Calu3 (cell line): ENCODE measurements at regions of chr15 and their contacts with region 1.

Region 1: DNA sequence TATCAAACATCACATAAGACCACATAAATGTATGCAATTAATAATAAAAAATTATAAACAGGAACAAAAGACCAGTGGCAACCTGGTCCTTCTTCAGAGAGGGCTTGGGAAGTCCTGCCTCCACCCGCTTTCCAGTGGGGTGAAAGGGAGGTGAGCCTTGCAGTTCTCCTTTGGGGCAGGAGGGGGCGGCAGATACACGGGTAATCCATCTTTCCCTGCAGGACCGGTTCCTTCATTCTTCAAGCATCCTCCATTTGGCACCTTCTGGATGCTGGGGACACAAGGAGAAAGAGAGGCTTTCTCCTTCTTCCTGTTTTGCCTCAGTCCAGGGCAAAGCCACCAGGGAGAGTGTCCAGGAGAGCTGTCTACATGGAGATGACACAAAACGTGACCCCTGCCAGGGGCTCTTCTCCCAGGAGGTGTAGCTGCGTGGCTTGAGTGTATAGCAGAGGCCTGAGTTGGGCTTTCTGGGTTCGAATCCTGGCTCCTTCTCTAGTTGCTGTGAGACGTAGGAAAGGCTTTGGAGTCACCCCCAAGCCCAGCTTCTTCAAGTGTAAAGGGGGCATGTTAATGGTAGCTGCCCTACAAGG is 23.2 kb downstream of the RPLP1 start:
- DNase-seq: peak; percentile 93
- H3K4me3 Mint-ChIP-seq: no peak overlapping the region
- H3K27ac Mint-ChIP-seq: no peak overlapping the region
- H3K4me1 Mint-ChIP-seq: peaks cover 25% of the 10 kb centered on the region
- H3K27me3 Mint-ChIP-seq: no peaks in the 10 kb centered on the region
- CTCF ChIP-seq: peak; percentile 97

Region 2: GRCh38 chr15:69523010-69524001 is 47.4 kb after region 1 on chr15:
- CTCF ChIA-PET with region 1: interaction called, 4 read pairs
- intact Hi-C with region 1: loop called (anchors 5 kb)
- DNase-seq: peak; percentile 87
- H3K4me3 Mint-ChIP-seq: no peak overlapping the region
- H3K27ac Mint-ChIP-seq: no peak overlapping the region
- H3K4me1 Mint-ChIP-seq: peaks cover 26% of the 10 kb centered on the region
- H3K27me3 Mint-ChIP-seq: no peaks in the 10 kb centered on the region
- CTCF ChIP-seq: peak; percentile 61

Region 3: GRCh38 chr15:69979783-69980182 is 503.9 kb after region 1 on chr15:
- CTCF ChIA-PET with region 1: no interaction called
- intact Hi-C with region 1: loop called (anchors 10 kb)
- DNase-seq: no peak
- H3K4me3 Mint-ChIP-seq: no peak overlapping the region
- H3K27ac Mint-ChIP-seq: no peak overlapping the region
- H3K4me1 Mint-ChIP-seq: peaks cover 13% of the 10 kb centered on the region
- H3K27me3 Mint-ChIP-seq: peaks cover 87% of the 10 kb centered on the region
- CTCF ChIP-seq: no peak

Region 4: DNA sequence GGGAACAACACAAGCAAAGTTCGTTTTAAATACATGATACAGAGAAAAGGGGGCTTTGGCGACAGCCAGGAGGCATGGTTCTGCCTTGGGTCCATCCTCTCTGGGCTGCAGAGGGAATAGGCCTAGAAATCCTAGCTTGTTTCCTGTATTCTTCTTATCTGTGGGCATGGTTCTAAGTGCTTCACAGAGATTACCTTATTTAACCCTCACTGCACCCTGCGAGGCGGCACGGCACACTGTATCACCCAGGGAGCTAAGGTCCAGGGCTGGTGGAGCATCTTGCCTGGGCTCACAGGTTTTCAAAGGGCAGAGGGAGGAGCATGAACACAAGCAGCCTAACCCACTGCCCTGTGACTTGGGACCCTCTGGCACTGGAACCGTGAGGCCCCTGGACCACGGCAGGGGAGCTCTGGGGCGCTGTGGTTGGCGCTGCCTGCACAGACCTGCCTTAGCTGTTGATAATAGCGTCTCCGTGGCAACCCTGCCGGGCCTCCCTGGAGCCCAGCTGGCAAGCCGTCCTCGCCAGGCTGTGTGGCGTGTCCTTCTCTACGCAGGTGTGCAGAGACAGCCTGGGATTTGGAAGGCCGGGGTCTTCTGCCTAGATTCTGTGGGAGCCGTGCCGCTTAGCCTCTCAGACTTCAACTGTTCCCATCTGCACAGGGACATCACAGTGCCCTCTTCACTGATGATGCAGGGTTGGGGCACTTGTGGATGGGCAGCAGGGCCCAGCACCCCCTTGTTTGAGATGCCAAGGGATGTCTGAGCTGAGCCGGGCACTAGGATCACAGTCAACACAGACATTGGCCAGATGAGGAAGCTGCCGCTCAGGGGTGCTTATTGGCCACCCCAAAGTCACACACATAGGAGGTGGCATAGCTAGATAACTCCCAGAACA is 776.4 kb after region 1 on chr15:
- CTCF ChIA-PET with region 1: no interaction called
- intact Hi-C with region 1: loop called (anchors 5 kb)
- DNase-seq: no peak
- H3K4me3 Mint-ChIP-seq: no peak overlapping the region
- H3K27ac Mint-ChIP-seq: no peak overlapping the region
- H3K4me1 Mint-ChIP-seq: peaks cover 9% of the 10 kb centered on the region
- H3K27me3 Mint-ChIP-seq: peaks cover 44% of the 10 kb centered on the region
- CTCF ChIP-seq: no peak

Region 5: DNA sequence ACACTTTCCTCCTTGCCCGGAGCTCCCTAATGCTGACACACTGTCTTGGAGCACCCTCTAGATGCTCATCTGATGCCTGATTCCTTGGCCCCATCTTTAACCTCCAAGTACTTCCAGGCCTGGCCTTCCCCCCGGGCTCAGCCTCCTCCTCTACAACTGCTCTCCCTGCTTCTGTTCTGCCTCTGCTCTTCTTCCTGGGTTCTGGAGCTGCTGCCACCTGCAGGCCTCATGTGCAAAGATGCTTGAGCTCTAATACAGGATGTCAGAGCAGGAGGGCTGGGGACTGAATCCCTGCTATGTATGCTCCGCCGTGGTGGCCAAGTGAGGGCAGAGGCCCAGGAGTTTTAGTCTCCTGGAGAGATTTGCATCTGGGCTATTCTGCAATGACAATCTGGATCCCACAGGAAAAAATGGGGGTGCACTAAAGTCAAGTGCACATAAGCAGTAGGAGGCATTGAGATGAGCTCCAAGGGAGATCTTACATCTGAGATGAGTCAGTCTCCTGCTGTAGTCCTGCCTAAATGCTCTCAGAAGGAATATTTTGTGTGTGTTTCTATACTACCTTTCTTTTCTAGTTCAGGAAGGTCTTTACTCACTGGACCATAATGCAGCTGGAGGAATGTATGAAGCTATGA is 991.1 kb after region 1 on chr15:
- CTCF ChIA-PET with region 1: interaction called, 3 read pairs
- intact Hi-C with region 1: loop called (anchors 2 kb)
- DNase-seq: peak; percentile 72
- H3K4me3 Mint-ChIP-seq: no peak overlapping the region
- H3K27ac Mint-ChIP-seq: no peak overlapping the region
- H3K4me1 Mint-ChIP-seq: peaks cover 10% of the 10 kb centered on the region
- H3K27me3 Mint-ChIP-seq: peaks cover 24% of the 10 kb centered on the region
- CTCF ChIP-seq: peak; percentile 81